Colonic mucosa (tissue), 4 donors: ENCODE measurements at regions of chr6 and their contacts with region 1.

Region 1: DNA sequence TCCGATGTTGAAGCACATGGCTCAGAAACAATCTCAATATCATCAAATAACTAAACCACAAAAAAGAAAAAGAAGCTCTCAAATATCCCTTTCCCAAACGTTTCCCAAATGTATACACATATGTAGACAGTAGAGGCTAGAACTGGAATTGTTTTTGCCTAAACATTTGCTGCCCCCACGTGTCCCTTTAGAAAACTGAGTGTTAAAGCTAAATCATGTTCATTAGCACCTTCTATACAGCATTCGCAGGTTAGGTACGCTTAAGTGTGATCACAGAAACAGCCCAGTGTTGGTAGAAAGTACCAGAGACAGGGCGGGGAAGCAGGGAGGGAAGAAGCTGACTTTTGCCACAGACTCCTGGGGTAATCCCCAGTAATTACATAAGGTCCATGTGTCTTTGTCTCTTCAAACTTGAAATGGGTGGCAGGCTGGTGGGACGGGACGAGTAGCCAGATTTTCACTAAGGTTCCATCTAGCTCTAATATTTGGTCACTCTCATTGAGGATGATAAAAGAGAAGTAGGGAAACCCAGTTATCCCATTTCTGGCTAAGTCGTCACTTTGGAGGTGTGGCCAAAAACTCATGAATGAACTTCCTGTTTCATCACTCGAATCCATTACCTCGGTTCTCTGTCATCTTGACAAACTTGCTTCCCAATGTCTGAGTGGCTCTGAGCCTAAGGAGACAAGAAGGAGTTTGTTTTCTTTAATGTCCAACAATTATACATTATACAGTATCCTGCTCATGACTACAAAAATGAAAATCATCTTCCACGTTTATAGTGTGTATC is 15.0 kb upstream of the TFAP2A start:
- DNase-seq: no peak
- H3K4me3 ChIP-seq: no peak overlapping the region
- H3K27ac ChIP-seq: no peak overlapping the region
- H3K4me1 ChIP-seq: peaks cover 7% of the 10 kb centered on the region
- H3K27me3 ChIP-seq: peaks cover 18% of the 10 kb centered on the region
- CTCF ChIP-seq: peak; percentile 47

Region 2: DNA sequence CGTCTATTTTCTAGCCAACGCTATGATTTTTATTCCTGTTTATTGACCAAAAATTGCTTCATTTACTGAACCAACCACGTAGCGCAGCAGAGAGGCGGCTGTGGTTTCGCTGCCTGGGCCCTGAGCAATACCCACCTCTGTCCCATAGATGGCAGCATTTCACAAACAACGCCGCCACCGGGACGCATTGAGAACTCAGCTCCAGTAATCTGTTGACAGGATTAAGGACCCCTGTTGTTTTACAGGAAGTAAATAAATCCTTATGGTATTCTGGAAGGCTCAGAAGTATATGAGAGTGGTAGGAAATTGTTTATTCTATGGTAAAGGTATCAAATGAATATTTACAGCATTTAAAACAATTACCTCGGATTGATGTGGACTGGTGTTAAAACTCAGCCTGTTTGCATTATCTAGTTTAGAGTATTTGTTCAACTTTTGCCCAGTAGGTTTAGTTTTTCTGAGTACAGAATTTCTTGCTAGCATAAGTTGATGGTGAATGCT is 1446.6 kb before region 1 on chr6:
- intact Hi-C with region 1: loop called (anchors 10 kb)
- DNase-seq: peak; percentile 63
- H3K4me3 ChIP-seq: no peak overlapping the region
- H3K27ac ChIP-seq: no peak overlapping the region
- H3K4me1 ChIP-seq: no peaks in the 10 kb centered on the region
- H3K27me3 ChIP-seq: no peaks in the 10 kb centered on the region
- CTCF ChIP-seq: peak; percentile 97

Region 3: DNA sequence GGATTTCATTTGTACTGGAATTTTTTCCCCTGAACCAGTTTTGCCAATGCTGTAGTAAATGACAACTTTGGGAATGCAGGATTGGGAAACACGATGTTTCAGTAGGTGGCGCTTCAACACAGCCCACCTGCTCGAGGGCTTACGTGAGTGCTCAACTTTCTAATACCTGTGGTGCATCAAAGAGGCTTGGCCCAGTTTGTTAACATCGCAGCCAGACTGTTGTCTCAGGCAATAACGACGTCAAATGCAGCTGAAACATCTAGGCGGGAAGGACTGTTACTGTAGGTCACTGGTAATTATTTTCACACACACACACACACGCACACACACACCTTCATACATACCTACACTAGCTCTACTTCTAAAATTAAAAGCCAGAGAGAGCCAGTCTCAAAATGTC is 1179.0 kb before region 1 on chr6:
- intact Hi-C with region 1: loop called (anchors 10 kb)
- DNase-seq: peak; percentile 24
- H3K4me3 ChIP-seq: no peak overlapping the region
- H3K27ac ChIP-seq: no peak overlapping the region
- H3K4me1 ChIP-seq: no peaks in the 10 kb centered on the region
- H3K27me3 ChIP-seq: no peaks in the 10 kb centered on the region
- CTCF ChIP-seq: peak; percentile 21

Region 4: GRCh38 chr6:9540534-9541126 is 889.2 kb before region 1 on chr6:
- intact Hi-C with region 1: loop called (anchors 5 kb)
- DNase-seq: no peak
- H3K4me3 ChIP-seq: no peak overlapping the region
- H3K27ac ChIP-seq: no peak overlapping the region
- H3K4me1 ChIP-seq: no peaks in the 10 kb centered on the region
- H3K27me3 ChIP-seq: no peaks in the 10 kb centered on the region
- CTCF ChIP-seq: peak; percentile 53

Region 5: DNA sequence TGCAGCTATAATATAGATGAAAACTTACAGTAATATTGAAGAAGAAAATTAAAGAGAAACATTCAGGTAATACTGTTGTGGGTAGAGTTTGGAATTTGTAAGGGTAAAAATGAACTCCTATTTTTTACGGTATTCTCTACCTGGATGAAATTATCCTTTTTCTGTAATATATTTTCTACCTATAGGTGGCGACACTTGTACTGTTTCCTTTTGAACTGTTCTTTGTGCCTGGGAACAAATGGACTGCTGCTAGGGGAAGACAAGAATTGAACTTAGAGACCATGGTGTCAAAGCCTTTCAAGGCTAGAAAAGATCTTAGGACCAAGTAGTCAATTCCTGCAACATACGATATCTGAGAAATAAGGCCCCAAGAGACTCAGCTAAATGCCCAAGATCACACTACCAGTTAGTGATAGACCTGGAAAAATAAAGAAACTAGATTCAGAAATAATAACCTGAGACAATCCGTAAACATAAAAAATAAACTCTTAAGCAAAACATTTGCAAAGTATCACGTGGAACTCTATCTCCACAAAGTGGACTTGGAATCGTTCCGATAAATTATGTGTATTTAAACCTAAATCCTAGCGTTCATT is 398.8 kb before region 1 on chr6:
- intact Hi-C with region 1: loop called (anchors 10 kb)
- DNase-seq: no peak
- H3K4me3 ChIP-seq: no peak overlapping the region
- H3K27ac ChIP-seq: no peak overlapping the region
- H3K4me1 ChIP-seq: no peaks in the 10 kb centered on the region
- H3K27me3 ChIP-seq: no peaks in the 10 kb centered on the region
- CTCF ChIP-seq: peak; percentile 40

Region 6: DNA sequence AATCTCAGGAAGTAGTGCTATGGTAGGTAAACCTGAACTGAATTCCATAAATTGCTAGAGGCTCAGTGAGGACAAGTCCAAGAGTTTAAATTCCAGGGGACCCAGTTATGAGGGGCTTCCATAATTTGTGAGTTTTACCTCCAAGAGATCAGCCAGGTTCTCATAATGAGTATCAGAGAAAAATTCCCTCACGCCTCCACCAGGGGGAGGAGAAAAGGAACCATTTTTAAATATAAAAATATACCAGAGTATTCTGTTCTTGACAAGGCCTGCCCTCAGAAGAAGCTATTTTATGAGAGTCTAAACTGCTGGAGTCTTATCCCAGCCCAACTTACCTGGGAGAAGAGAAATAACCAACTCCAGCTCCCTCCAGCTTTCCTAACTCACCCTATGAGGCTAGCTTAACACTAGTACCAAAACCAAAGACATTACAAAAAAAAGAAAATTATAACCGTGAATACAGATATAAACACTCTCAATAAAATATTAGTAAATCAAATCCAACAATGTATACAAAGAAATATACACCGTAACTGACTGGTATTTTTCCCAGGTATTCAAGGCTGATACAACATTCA is 173.6 kb before region 1 on chr6:
- intact Hi-C with region 1: loop called (anchors 10 kb)
- DNase-seq: no peak
- H3K4me3 ChIP-seq: no peak overlapping the region
- H3K27ac ChIP-seq: no peak overlapping the region
- H3K4me1 ChIP-seq: no peaks in the 10 kb centered on the region
- H3K27me3 ChIP-seq: no peaks in the 10 kb centered on the region
- CTCF ChIP-seq: peak; percentile 49